Activated CD4-positive, alpha-beta memory T cell treated with anti-CD3 and anti-CD28 coated beads for 36 hours (primary cell): ENCODE measurements at regions of chr15 and their contacts with region 1.

Region 1: DNA sequence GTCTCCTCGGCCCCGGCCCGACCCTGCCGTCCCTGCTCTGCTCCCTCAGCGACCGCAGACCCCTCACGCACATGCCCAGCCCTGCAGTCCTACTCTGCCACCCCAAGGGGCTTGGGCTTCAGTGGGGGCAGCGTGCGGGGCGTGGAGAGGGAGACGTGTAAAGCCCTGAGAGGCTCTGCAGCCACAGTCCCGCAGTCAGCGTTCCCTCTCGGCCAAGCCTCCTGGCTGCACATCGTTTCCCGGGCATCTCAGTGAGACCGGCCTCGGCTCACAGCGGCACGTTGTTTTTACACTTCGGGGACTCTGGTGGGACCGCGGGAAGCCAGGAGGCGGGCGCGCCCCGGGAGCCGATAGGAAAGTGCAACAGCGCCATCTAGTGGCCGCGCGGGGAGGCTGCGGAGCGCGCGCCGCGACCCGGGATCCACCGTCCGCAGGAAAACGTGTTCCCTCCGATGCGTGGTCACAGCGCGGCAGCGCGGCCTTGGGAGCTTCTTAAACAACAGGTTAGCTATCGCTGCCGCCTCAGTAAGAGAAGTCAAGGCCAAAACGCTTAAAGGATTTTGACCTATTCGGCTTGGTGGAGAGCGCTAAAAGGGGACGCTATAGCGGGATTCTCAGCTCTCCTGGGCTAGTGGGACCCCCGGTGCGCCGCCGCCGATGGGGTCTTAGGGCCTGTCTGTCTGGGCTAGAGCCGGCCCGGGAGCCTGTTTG is 226.8 kb upstream of the IGF1R start:
- DNase-seq: peak; percentile 66
- H3K4me3 Mint-ChIP-seq: no peak overlapping the region
- H3K27ac Mint-ChIP-seq: no peak overlapping the region
- H3K4me1 Mint-ChIP-seq: peaks cover 7% of the 10 kb centered on the region
- H3K27me3 Mint-ChIP-seq: peaks cover 43% of the 10 kb centered on the region

Region 2: GRCh38 chr15:98292442-98293240 is 128.9 kb before region 1 on chr15:
- CTCF ChIA-PET with region 1: interaction called, 5 read pairs
- POLR2A ChIA-PET with region 1: no interaction called
- intact Hi-C with region 1: loop called (anchors 5 kb)
- DNase-seq: peak; percentile 56
- H3K4me3 Mint-ChIP-seq: no peak overlapping the region
- H3K27ac Mint-ChIP-seq: no peak overlapping the region
- H3K4me1 Mint-ChIP-seq: no peaks in the 10 kb centered on the region
- H3K27me3 Mint-ChIP-seq: peaks cover 3% of the 10 kb centered on the region